ENCODE measurements at regions of chr3 and their contacts with region 1.

Region 1: GRCh38 chr3:137013955-137014688 is 56.3 kb downstream of the IL20RB start:
- DNase-seq: peak; percentile 29
- H3K4me3 ChIP-seq: peak overlapping the region; percentile 67
- CTCF ChIP-seq: peak; percentile 75

Region 2: GRCh38 chr3:136075218-136075808 is 938.8 kb before region 1 on chr3:
- CTCF ChIA-PET with region 1: interaction called, 11 read pairs
- POLR2A ChIA-PET with region 1: no interaction called
- DNase-seq: no peak
- H3K4me3 ChIP-seq: no peak overlapping the region
- CTCF ChIP-seq: peak; percentile 74

Region 3: DNA sequence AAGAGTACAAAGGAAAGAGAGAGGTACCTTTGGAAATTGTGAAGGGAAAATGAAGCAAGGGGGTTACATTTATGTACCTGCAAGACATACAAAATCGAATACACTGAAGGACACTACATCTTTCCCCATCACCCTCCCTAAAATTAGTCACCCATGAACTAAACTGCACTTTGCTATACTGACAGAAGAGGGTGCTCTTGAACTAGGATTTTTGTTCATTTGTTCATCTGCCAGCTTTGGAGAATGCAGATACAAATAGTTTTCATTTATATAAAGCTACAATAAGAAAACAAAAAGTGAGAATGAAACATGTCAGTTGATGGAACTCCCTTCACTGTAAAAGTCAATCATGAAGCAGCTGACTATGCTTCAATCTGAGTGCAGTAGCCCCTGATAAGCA is 708.2 kb before region 1 on chr3:
- CTCF ChIA-PET with region 1: interaction called, 18 read pairs
- POLR2A ChIA-PET with region 1: no interaction called
- DNase-seq: peak; percentile 28
- H3K4me3 ChIP-seq: no peak overlapping the region
- CTCF ChIP-seq: peak; percentile 57

Region 4: GRCh38 chr3:136861890-136862616 is 152.1 kb before region 1 on chr3 and contains the start of gene NCK1:
- CTCF ChIA-PET with region 1: interaction called, 11 read pairs
- POLR2A ChIA-PET with region 1: interaction called, 3 read pairs
- DNase-seq: peak; percentile 87
- H3K4me3 ChIP-seq: peak within 1 kb of the TSS; percentile 92
- CTCF ChIP-seq: no peak

Region 5: GRCh38 chr3:136949708-136950107 is 64.4 kb before region 1 on chr3:
- CTCF ChIA-PET with region 1: interaction called, 53 read pairs
- POLR2A ChIA-PET with region 1: no interaction called
- DNase-seq: no peak
- H3K4me3 ChIP-seq: no peak overlapping the region
- CTCF ChIP-seq: no peak

Measured in AG04449 (cell line).